Testis (tissue), 5 donors: ENCODE measurements at regions of chr2 and their contacts with region 1.

Region 1: GRCh38 chr2:11698009-11698922 is 28.3 kb upstream of the NTSR2 start:
- DNase-seq: peak; percentile 89
- H3K4me3 ChIP-seq: no peak overlapping the region
- H3K27ac ChIP-seq: peak overlapping the region; percentile 65 to 92
- H3K4me1 ChIP-seq: peaks cover 24% of the 10 kb centered on the region
- H3K27me3 ChIP-seq: no peaks in the 10 kb centered on the region
- CTCF ChIP-seq: no peak
- POLR2A ChIP-seq: no peak

Region 2: DNA sequence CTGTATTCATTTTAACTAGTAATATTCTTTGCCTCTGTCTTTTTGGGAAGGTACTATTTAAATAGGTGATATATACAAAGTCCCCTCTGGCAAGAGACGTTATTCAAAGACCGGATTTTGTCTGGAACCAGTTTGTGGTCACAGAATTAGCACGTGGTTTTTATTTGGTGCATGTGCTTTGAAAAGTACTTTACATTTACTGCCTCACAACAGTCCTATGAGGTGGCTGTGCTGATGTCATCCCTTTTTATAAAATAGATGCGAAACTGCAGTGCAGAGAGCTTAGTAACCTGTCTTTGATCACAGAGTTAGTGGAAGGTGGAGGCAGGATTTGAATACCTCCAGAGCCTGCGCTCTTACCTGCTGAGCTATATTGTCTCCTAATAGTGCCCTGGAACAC is 52.2 kb after region 1 on chr2:
- intact Hi-C with region 1: loop called (anchors 2 kb)
- DNase-seq: no peak
- H3K4me3 ChIP-seq: no peak overlapping the region
- H3K27ac ChIP-seq: peak overlapping the region; percentile 83 to 85
- H3K4me1 ChIP-seq: peaks cover 36% of the 10 kb centered on the region
- H3K27me3 ChIP-seq: no peaks in the 10 kb centered on the region
- CTCF ChIP-seq: no peak
- POLR2A ChIP-seq: no peak